HEK293 (cell line): ENCODE measurements at regions of chr3 and their contacts with region 1.

Region 1: GRCh38 chr3:14780927-14781507 is 37.7 kb upstream of the FGD5 start:
- H3K4me3 ChIP-seq: no peak overlapping the region
- H3K27ac ChIP-seq: no peak overlapping the region
- H3K4me1 ChIP-seq: no peaks in the 10 kb centered on the region
- CTCF ChIP-seq: no peak

Region 2: DNA sequence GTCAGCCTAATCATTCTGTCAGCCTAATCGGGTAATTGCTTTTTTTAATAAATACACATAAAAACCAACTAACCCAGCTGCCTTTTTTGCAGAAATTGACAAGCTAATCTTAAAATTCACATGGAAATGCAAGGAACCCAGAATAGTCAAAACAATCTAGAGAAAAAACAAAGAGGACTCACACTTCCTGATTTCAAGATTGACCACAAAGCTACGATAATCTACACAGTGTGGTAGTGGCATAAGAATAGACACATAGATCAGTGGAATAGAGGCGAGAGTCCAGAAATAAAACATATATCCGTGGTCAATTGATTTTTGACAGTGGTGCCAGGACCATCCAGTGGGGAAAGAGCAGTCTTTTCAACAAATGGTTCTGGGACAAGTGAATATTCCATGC is 108.4 kb before region 1 on chr3:
- CTCF ChIA-PET with region 1: interaction called, 30 read pairs
- POLR2A ChIA-PET with region 1: no interaction called
- H3K4me3 ChIP-seq: no peak overlapping the region
- H3K27ac ChIP-seq: no peak overlapping the region
- H3K4me1 ChIP-seq: no peaks in the 10 kb centered on the region
- CTCF ChIP-seq: no peak

Region 3: GRCh38 chr3:14678015-14678503 is 103.0 kb before region 1 on chr3:
- CTCF ChIA-PET with region 1: interaction called, 30 read pairs
- POLR2A ChIA-PET with region 1: no interaction called
- H3K4me3 ChIP-seq: no peak overlapping the region
- H3K27ac ChIP-seq: no peak overlapping the region
- H3K4me1 ChIP-seq: no peaks in the 10 kb centered on the region
- CTCF ChIP-seq: no peak

Region 4: GRCh38 chr3:14764331-14765059 is 16.5 kb before region 1 on chr3:
- CTCF ChIA-PET with region 1: interaction called, 12 read pairs
- POLR2A ChIA-PET with region 1: no interaction called
- H3K4me3 ChIP-seq: no peak overlapping the region
- H3K27ac ChIP-seq: no peak overlapping the region
- H3K4me1 ChIP-seq: no peaks in the 10 kb centered on the region
- CTCF ChIP-seq: no peak

Region 5: DNA sequence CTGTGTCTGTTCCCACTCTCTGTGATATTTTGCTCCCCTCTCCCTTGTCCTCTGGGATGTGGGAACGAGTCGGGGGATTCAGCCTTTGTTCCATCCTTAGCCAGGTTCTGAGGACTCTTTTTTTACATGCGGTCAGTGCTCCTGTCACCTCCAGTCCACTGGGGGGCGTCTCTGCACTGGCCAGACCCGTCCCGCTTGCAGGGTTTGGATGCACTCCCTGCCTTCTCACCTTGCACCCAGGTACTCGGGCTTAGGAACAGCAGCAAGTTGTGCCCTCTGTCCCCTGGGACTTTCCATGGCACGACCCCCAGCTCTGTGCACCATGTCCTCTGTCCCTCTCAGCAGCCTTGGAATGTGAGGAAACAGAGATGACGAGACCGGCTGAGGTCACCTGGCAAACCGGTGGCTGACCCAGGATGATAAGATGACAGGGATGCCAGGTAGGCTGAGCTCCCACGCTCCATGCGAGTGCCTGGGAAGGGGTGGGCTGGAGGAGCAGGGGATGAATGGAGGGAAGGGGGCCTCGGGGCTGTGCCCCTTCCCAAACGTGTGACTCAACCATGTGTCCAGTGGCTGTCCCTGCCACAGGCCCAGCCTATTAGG is 10.4 kb after region 1 on chr3:
- CTCF ChIA-PET with region 1: interaction called, 28 read pairs
- POLR2A ChIA-PET with region 1: no interaction called
- H3K4me3 ChIP-seq: no peak overlapping the region
- H3K27ac ChIP-seq: no peak overlapping the region
- H3K4me1 ChIP-seq: no peaks in the 10 kb centered on the region
- CTCF ChIP-seq: peak; percentile 89